ENCODE measurements at regions of chr5 and their contacts with region 1.

Region 1: DNA sequence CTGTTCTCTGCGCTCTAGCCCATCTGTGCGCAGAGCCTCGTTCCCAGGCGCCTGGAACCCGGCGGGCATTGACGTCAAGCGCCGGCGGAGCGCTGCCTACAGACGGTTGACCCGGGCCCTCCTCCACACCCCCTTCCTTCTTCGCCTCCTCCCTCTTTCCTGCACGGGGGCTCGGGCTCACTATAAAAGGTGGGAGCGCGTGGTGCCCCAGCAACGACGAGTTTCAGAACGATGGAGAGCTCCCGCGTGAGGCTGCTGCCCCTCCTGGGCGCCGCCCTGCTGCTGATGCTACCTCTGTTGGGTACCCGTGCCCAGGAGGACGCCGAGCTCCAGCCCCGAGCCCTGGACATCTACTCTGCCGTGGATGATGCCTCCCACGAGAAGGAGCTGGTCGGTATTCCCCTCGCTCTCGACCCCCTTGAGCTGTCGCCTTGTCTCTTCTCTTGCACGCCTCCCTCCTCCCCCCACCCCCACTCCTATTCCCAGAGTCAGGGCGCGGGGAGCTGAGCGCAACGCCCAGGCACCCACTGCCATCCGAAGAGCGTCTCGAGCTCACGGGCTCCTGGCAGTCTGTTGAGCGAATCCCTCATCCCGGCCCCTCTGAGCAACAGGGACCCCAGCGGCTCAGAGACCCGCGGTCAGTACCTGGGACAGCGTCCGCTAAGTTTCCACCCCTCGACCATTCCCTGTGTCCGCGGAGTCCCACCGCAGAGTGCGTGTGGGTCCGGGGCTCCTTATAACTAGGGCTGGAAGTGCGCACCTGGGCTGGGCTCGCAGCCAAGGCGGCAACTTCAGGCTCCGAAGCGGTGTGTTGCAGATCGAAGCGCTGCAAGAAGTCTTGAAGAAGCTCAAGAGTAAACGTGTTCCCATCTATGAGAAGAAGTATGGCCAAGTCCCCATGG is at the start of gene CARTPT:
- DNase-seq: peak; percentile 6
- ATAC-seq: peak; percentile 61; the same call in 1 of the 2 replicates
- H3K4me3 ChIP-seq: no peak within 1 kb of the TSS
- H3K27ac ChIP-seq: no peak within 1 kb of the TSS
- H3K4me1 ChIP-seq: no peaks in the 10 kb centered on the region
- H3K27me3 ChIP-seq: peaks cover 21% of the 10 kb centered on the region
- CTCF ChIP-seq: no peak
- POLR2A ChIP-seq: no peak
- RAD21 ChIP-seq: no peak
- total RNA-seq, gene CARTPT: not detected in 2 replicates

Region 2: DNA sequence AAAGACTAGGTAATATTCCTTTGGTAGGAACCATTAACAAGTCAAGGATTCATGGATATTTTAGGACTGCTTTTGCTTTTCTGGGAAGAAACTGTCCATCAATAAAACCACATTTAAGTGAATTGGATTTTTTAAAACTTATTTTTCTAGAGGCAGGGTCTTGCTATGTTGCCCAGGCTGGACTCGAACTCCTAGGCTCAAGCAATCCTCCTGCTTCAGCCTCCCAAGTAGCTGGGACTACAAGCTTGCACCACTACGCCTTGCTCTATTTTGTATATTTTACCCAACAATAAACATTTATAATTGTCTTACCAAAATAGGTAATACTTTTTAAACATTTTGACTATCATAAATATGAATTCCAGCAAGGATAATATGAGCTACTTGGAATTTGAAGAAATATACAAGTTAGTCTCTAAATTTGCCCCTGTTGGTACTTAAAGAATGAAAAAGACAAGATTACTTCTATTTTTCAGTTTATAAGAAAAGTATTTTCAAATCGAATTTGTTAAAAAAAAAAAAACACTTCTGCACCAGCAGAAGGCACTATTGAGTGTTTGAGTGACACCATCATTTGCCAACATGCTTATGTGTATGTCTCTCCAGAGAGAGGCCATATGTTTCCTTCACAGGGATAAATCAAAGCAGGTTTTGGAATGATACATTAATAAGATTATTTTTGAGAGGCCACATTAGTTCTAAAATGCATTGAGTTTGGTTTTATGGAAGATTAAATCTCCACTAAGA is 60.2 kb before region 1 on chr5:
- CTCF ChIA-PET with region 1: no interaction called
- POLR2A ChIA-PET with region 1: no interaction called
- dilution Hi-C with region 1: no loop called
- in situ Hi-C with region 1: no loop called
- intact Hi-C with region 1: no loop called
- DNase-seq: no peak
- ATAC-seq: no peak
- H3K4me3 ChIP-seq: no peak overlapping the region
- H3K27ac ChIP-seq: no peak overlapping the region
- H3K4me1 ChIP-seq: no peaks in the 10 kb centered on the region
- H3K27me3 ChIP-seq: no peaks in the 10 kb centered on the region
- CTCF ChIP-seq: no peak
- POLR2A ChIP-seq: no peak
- RAD21 ChIP-seq: no peak

Region 3: DNA sequence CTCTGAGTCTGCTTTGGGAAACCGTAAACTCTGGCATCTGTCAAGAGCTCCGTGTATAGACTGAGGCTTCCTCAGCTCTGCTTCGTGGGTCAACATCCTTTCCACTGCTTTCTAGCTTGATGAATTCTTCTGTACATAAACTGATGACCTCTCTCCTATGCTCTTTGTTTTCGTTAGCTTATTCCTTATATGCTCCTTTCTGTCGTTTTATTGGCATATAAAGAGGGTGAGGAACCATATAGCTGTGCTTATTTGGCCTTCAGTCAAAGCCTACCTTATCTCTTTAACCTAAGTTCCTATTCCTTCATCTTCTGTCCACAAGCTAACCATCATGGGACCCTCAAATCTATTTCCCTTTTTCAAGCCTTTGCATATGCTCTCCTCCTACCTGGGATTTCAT is 39.6 kb before region 1 on chr5:
- CTCF ChIA-PET with region 1: no interaction called
- POLR2A ChIA-PET with region 1: no interaction called
- dilution Hi-C with region 1: no loop called
- in situ Hi-C with region 1: no loop called
- intact Hi-C with region 1: loop called (anchors 5 kb)
- DNase-seq: no peak
- ATAC-seq: no peak
- H3K4me3 ChIP-seq: no peak overlapping the region
- H3K27ac ChIP-seq: no peak overlapping the region
- H3K4me1 ChIP-seq: no peaks in the 10 kb centered on the region
- H3K27me3 ChIP-seq: peaks cover 18% of the 10 kb centered on the region
- CTCF ChIP-seq: no peak
- POLR2A ChIP-seq: no peak
- RAD21 ChIP-seq: no peak

Region 4: DNA sequence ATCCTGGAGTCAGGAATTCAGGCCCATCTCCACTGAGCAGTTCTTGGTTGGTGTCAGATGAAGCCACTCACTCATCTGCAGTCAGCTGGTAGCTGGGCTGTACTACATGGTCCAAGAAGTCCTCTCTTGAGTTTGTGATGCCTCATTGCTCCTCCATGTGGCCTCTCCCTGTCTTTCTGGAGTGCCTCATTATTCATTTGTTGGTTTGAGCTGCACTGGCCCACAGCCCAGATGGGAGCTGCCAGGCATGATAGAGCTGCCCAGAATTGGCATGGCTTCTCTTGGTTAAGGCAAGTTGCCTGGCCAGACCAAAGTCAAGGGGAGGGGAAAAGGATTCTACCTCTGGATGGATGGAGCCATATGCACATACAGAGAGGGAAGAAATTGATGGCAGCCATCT is 608.9 kb after region 1 on chr5:
- CTCF ChIA-PET with region 1: no interaction called
- POLR2A ChIA-PET with region 1: no interaction called
- dilution Hi-C with region 1: no loop called
- in situ Hi-C with region 1: no loop called
- intact Hi-C with region 1: no loop called
- DNase-seq: peak; percentile 21
- ATAC-seq: peak; percentile 36; the same call in 1 of the 2 replicates
- H3K4me3 ChIP-seq: no peak overlapping the region
- H3K27ac ChIP-seq: peak overlapping the region; percentile 21; the same call in 1 of the 2 replicates
- H3K4me1 ChIP-seq: peaks cover 20% of the 10 kb centered on the region
- H3K27me3 ChIP-seq: no peaks in the 10 kb centered on the region
- CTCF ChIP-seq: no peak
- POLR2A ChIP-seq: no peak
- RAD21 ChIP-seq: no peak

Measured in IMR-90 (cell line).